ENCODE measurements at regions of chr22 and their contacts with region 1.

Region 1: DNA sequence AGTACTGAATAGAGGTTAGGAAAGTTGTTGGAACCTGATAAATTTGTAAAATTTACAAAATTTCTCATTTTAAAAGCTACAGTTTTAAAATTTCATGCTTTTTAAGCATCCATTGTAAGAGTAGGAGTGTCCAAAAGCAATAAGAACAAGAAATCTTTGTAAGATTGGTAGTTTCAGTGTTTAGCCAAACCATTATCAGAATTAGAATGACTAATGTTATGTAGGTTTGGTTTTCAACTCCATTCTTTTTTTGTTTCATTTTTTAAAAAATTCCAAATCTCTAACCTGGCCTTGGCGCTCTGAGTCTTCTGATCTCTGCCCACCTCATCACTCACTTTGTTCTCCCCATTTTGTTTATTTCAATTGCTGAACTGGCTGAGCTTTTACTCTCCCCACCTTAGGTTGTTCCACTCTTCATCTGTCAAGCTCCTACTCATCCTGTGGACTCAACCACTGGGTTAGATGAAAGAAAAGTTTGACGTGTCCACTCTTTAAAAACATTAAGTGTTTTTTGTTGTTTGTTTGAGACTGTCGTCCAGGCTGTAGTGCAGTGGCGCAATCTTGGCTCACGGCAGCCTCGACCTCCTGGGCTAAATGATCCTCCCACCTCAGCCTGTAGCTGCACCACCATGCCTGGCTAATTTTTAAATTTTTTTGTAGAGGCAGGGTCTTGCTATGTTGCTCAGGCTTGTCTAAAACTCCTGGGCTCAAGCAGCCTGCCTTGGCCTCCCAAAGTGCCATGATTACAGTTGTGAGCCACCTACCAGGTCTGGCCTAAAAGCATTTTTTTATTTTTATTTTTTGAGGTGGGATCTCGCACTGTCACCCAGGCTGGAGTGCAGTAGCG is 14.0 kb downstream of the EP300 start:
- DNase-seq: no peak
- ATAC-seq: peak; percentile 37
- H3K4me3 ChIP-seq: no peak overlapping the region
- H3K4me3 Mint-ChIP-seq: peak overlapping the region; percentile 31
- H3K27ac ChIP-seq: peak overlapping the region in 1 of 2 donors; percentile 54
- H3K27ac Mint-ChIP-seq: peak overlapping the region; percentile 20
- H3K4me1 ChIP-seq: peaks cover 45% of the 10 kb centered on the region
- H3K4me1 Mint-ChIP-seq: peaks cover 70% of the 10 kb centered on the region
- H3K27me3 ChIP-seq: no peaks in the 10 kb centered on the region
- H3K27me3 Mint-ChIP-seq: no peaks in the 10 kb centered on the region
- CTCF ChIP-seq: no peak

Region 2: DNA sequence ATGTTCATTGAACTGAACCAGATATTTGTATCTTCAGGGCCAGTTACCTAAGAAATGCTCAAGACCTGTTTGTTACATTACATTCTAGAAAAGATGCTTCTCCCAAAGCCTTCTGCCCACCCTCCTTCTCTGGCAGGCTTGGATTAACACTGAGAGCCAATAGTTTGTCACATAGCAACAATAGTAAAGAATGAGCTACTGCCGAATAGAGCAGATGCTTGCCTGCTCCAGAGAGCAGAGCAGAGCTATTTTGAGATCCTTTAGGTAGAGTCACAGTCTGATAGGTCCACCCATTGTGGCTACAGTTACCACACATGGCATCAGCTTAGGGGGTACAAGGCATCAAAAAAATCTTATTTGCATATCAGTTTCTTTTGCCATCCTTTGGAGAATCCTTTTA is 27.4 kb before region 1 on chr22:
- CTCF ChIA-PET with region 1: no interaction called
- POLR2A ChIA-PET with region 1: no interaction called
- intact Hi-C with region 1: no loop called
- DNase-seq: no peak
- ATAC-seq: no peak
- H3K4me3 ChIP-seq: no peak overlapping the region
- H3K4me3 Mint-ChIP-seq: no peak overlapping the region
- H3K27ac ChIP-seq: no peak overlapping the region
- H3K27ac Mint-ChIP-seq: no peak overlapping the region
- H3K4me1 ChIP-seq: no peaks in the 10 kb centered on the region
- H3K4me1 Mint-ChIP-seq: no peaks in the 10 kb centered on the region
- H3K27me3 ChIP-seq: no peaks in the 10 kb centered on the region
- H3K27me3 Mint-ChIP-seq: peaks cover 6% of the 10 kb centered on the region
- CTCF ChIP-seq: no peak

Region 3: GRCh38 chr22:41117127-41117965 is 11.0 kb after region 1 on chr22:
- CTCF ChIA-PET with region 1: no interaction called
- POLR2A ChIA-PET with region 1: no interaction called
- intact Hi-C with region 1: loop called in 1 of 2 experiments (anchors 2 kb)
- DNase-seq: no peak
- ATAC-seq: no peak
- H3K4me3 ChIP-seq: no peak overlapping the region
- H3K4me3 Mint-ChIP-seq: no peak overlapping the region
- H3K27ac ChIP-seq: no peak overlapping the region
- H3K27ac Mint-ChIP-seq: no peak overlapping the region
- H3K4me1 ChIP-seq: peaks cover 17% of the 10 kb centered on the region
- H3K4me1 Mint-ChIP-seq: peaks cover 54% of the 10 kb centered on the region
- H3K27me3 ChIP-seq: no peaks in the 10 kb centered on the region
- H3K27me3 Mint-ChIP-seq: no peaks in the 10 kb centered on the region
- CTCF ChIP-seq: no peak

Region 4: DNA sequence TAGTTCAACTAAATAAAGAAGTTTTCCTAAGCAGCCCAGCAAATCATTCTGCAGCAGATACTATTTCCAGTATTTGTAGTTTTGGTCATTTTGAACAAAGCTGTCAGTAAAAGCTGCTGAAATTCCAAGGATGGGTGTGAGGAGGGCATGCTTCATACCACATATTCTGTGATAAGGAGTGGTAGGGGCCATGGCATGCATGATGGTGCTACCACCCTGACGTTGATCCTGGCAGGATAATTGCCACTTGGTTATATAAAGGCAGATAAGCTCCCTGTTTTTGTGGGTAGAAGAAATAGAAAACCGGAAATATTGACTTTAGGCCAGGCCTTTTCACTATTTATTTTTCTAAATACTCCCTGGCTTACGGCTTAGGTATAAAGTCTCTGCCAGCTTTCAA is 65.7 kb after region 1 on chr22:
- CTCF ChIA-PET with region 1: no interaction called
- POLR2A ChIA-PET with region 1: no interaction called
- intact Hi-C with region 1: no loop called
- DNase-seq: no peak
- ATAC-seq: no peak
- H3K4me3 ChIP-seq: no peak overlapping the region
- H3K4me3 Mint-ChIP-seq: no peak overlapping the region
- H3K27ac ChIP-seq: no peak overlapping the region
- H3K27ac Mint-ChIP-seq: no peak overlapping the region
- H3K4me1 ChIP-seq: peaks cover 5% of the 10 kb centered on the region
- H3K4me1 Mint-ChIP-seq: peaks cover 21% of the 10 kb centered on the region
- H3K27me3 ChIP-seq: no peaks in the 10 kb centered on the region
- H3K27me3 Mint-ChIP-seq: no peaks in the 10 kb centered on the region
- CTCF ChIP-seq: no peak

Measured in CD4-positive, alpha-beta T cell (primary cell).